ENCODE measurements at regions of chr7 and their contacts with region 1.

Region 1: GRCh38 chr7:134878731-134879295 is 99.4 kb downstream of the CALD1 start:
- DNase-seq: peak in 1 of 2 experiments; percentile 30
- H3K4me3 ChIP-seq: no peak overlapping the region
- H3K4me3 Mint-ChIP-seq: no peak overlapping the region
- H3K27ac Mint-ChIP-seq: no peak overlapping the region
- H3K4me1 ChIP-seq: peaks cover 51% of the 10 kb centered on the region
- H3K4me1 Mint-ChIP-seq: peaks cover 25% of the 10 kb centered on the region
- H3K27me3 ChIP-seq: no peaks in the 10 kb centered on the region; the same call in 1 of the 2 replicates
- H3K27me3 Mint-ChIP-seq: no peaks in the 10 kb centered on the region
- CTCF ChIP-seq: peak in 1 of 2 experiments; percentile 10

Region 2: GRCh38 chr7:134900166-134900982 is 21.6 kb after region 1 on chr7:
- CTCF ChIA-PET with region 1: no interaction called
- POLR2A ChIA-PET with region 1: no interaction called
- intact Hi-C with region 1: loop called (anchors 1 kb)
- DNase-seq: no peak
- H3K4me3 ChIP-seq: no peak overlapping the region
- H3K4me3 Mint-ChIP-seq: peak overlapping the region; percentile 56
- H3K27ac Mint-ChIP-seq: peak overlapping the region; percentile 87
- H3K4me1 ChIP-seq: peaks cover 57% of the 10 kb centered on the region
- H3K4me1 Mint-ChIP-seq: peaks cover 50% of the 10 kb centered on the region
- H3K27me3 ChIP-seq: no peaks in the 10 kb centered on the region
- H3K27me3 Mint-ChIP-seq: no peaks in the 10 kb centered on the region
- CTCF ChIP-seq: no peak

Region 3: DNA sequence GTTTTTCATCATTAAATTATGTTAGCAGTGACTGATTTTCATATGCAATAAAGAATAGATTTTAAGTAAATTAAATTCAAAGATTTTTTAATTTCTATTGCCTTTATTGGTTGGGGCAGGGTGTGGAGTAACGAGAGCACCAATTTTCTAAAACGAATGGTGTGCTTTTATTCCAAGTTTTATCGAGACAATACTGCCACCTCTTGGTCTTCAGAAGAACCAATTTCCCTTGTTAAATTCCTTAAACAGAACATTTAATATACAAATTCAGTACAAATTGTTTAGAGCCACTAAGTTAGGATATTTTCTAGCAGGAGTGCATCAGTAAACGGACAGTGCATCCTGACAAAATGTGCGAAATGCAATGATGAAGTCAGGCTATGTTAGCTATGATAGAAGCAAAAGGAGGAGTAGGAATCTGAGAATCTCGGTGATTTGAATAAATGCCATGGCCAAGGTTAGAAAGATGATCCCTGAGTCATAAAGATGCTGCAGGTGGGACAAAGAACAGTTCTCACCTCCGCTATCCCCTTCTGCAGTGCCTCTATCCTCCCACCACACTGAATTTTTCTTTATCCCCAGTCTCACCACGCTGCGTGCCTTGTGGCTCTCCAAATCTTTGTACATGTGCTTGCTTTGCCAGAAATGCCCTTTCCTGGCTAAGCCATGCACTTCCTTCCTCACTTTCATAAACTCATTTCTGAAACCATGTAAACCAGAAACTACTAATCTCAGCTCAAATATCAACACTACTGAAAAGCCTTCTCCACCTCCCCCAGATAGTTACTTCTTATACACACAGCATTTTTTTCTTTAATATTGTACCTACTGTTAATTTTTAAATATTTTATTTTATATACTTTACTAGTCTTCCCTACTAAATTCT is 75.6 kb after region 1 on chr7:
- CTCF ChIA-PET with region 1: no interaction called
- POLR2A ChIA-PET with region 1: no interaction called
- intact Hi-C with region 1: loop called (anchors 2 kb)
- DNase-seq: no peak
- H3K4me3 ChIP-seq: no peak overlapping the region
- H3K4me3 Mint-ChIP-seq: no peak overlapping the region
- H3K27ac Mint-ChIP-seq: no peak overlapping the region
- H3K4me1 ChIP-seq: no peaks in the 10 kb centered on the region; the same call in 1 of the 2 replicates
- H3K4me1 Mint-ChIP-seq: peaks cover 4% of the 10 kb centered on the region
- H3K27me3 ChIP-seq: no peaks in the 10 kb centered on the region
- H3K27me3 Mint-ChIP-seq: no peaks in the 10 kb centered on the region
- CTCF ChIP-seq: peak; percentile 37 to 61